Sciatic nerve (tissue), 2 donors: ENCODE measurements at regions of chr10 and their contacts with region 1.

Region 1: GRCh38 chr10:118369641-118370205 is 27.6 kb upstream of the FAM204A start:
- DNase-seq: no peak
- ATAC-seq: no peak

Region 2: GRCh38 chr10:116796910-116797513 is 1572.7 kb before region 1 on chr10:
- intact Hi-C with region 1: no loop called
- DNase-seq: peak; percentile 91
- ATAC-seq: peak; percentile 82

Region 3: GRCh38 chr10:119301397-119301796 is 931.7 kb after region 1 on chr10:
- intact Hi-C with region 1: loop called (anchors 5 kb)
- DNase-seq: no peak
- ATAC-seq: no peak